Adrenal gland (tissue), 19 donors: ENCODE measurements at regions of chr1 and their contacts with region 1.

Region 1: GRCh38 chr1:183281553-183282091 is 95.6 kb downstream of the LAMC2 start:
- DNase-seq: peak; percentile 84 to 97 (median 90)
- H3K4me3 ChIP-seq: no peak overlapping the region
- H3K27ac ChIP-seq: peak overlapping the region in 1 of 5 donors; percentile 79
- H3K4me1 ChIP-seq: peaks cover 0 to under 1% of the 10 kb centered on the region in 2 donors
- H3K27me3 ChIP-seq: no peaks in the 10 kb centered on the region
- CTCF ChIP-seq: peak; percentile 84 to 93 (median 89)
- POLR2A ChIP-seq: no peak

Region 2: DNA sequence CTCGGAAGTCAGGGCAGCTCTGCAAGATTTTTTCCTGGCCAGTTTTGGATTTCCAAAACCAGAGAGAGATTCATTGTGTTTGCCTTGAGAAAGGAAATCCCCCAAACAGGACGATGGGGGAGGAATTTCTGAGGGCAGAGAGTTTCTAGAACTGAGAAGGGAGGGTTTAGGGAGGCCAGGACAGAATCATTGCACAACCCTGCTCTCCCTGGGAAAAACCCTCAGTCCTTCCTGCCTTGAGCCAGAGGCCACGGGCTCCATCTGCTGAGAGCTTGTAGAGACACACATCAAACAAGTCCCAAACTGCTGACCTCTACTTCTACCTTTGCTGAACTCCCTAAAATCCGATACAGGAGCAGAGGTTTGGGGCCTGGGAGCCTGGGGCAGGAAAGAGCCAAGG is 36.8 kb after region 1 on chr1:
- intact Hi-C with region 1: loop called in 1 of 2 experiments (anchors 5 kb)
- DNase-seq: peak; percentile 51 to 83 (median 77)
- H3K4me3 ChIP-seq: no peak overlapping the region
- H3K27ac ChIP-seq: peak overlapping the region in 2 of 5 donors; percentile 45 to 62
- H3K4me1 ChIP-seq: no peaks in the 10 kb centered on the region
- H3K27me3 ChIP-seq: no peaks in the 10 kb centered on the region
- CTCF ChIP-seq: peak in 5 of 6 experiments; percentile 30 to 57 (median 53)
- POLR2A ChIP-seq: no peak

Region 3: GRCh38 chr1:183580281-183580682 is 298.7 kb after region 1 on chr1:
- intact Hi-C with region 1: no loop called
- DNase-seq: peak; percentile 30 to 73 (median 48)
- H3K4me3 ChIP-seq: no peak overlapping the region
- H3K27ac ChIP-seq: peak overlapping the region in 2 of 5 donors; percentile 6 to 72
- H3K4me1 ChIP-seq: no peaks in the 10 kb centered on the region
- H3K27me3 ChIP-seq: no peaks in the 10 kb centered on the region
- CTCF ChIP-seq: peak in 3 of 6 experiments; percentile 17 to 39 (median 26)
- POLR2A ChIP-seq: no peak

Region 4: DNA sequence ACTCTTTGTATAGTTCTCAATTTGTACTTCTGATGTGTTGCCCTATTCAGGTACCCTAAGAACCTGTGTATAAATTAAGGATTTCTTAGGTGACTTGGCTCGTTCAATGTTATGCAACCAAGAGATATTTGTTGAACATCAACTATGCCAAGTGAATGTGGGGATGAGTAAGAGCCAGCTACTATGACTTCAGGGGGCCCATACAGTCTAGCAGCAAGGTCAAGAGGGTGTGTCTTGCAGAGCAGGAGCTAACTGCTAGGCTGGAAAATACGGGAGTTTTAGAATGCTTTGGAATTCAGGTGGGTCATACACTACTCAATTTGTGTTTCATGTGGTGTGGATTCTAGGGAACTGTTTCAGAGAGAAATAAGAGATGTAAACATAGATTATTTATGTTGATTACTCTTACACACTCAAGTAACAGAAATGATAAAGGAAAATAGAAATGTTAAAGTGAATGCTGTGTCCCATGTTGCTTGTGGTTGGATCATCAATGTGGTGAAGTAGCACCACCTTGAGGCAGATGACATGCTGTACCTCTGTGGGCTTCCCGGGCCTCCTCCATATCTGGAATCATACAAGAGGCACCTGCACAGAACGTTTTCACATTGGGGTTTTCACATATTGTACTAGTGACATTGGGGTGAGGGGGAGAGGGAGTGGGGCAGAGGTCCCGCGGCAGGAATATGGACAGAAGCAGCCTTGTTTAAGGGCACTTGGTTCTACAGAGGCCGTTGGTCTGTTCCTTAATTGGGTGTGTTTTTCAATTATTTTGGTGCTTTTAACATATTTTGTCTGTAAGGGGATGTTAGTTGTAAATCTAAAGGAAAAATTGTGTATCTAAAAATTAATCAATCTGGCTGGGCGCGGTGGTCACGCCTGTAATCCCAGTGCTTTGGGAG is 341.5 kb after region 1 on chr1:
- intact Hi-C with region 1: loop called in 1 of 2 experiments (anchors 10 kb)
- DNase-seq: peak; percentile 54 to 82 (median 63)
- H3K4me3 ChIP-seq: no peak overlapping the region
- H3K27ac ChIP-seq: no peak overlapping the region
- H3K4me1 ChIP-seq: peaks cover 10 to 33% of the 10 kb centered on the region in 2 donors
- H3K27me3 ChIP-seq: no peaks in the 10 kb centered on the region
- CTCF ChIP-seq: peak; percentile 45 to 70 (median 62)
- POLR2A ChIP-seq: no peak